A673 (cell line): ENCODE measurements at regions of chr3 and their contacts with region 1.

Region 1: GRCh38 chr3:69671082-69671952 is 67.9 kb upstream of the MITF start:
- DNase-seq: peak; percentile 15
- H3K4me3 ChIP-seq: no peak overlapping the region
- H3K27ac ChIP-seq: no peak overlapping the region
- H3K4me1 ChIP-seq: no peaks in the 10 kb centered on the region
- H3K27me3 ChIP-seq: no peaks in the 10 kb centered on the region
- CTCF ChIP-seq: peak; percentile 52

Region 2: GRCh38 chr3:69306239-69307185 is 364.8 kb before region 1 on chr3:
- CTCF ChIA-PET with region 1: no interaction called
- POLR2A ChIA-PET with region 1: no interaction called
- intact Hi-C with region 1: loop called (anchors 5 kb)
- DNase-seq: peak; percentile 66
- H3K4me3 ChIP-seq: no peak overlapping the region
- H3K27ac ChIP-seq: no peak overlapping the region
- H3K4me1 ChIP-seq: no peaks in the 10 kb centered on the region
- H3K27me3 ChIP-seq: no peaks in the 10 kb centered on the region
- CTCF ChIP-seq: peak; percentile 69

Region 3: DNA sequence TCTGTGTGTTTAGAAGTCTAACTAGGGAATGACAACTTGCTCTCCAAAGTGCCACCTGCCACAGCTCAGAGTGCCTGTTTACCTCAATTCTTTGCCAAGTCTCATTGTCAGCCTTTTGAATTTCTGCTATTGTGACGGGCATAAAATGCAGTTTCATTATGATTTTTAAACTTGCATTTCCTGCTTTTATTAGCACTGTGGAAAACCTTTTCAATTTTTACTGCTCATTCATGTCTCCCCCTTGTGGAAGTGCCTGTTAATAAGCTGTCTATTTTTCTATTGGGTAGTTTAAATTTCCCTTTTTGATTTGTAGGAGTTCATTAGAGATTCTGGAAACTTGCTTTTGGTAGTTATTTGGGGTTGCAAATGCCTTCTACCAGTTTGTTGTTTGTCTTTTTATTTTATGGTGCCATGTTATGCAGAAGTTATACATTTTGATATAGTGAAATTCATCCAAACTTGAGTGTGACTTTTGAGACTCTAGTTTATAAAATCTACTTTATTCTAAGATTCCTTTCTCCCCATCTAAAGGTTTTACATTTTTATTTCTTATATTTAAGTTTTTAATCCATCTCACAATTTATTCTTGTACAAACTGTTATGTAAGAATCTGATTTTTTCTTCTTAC is 231.6 kb before region 1 on chr3:
- CTCF ChIA-PET with region 1: no interaction called
- POLR2A ChIA-PET with region 1: no interaction called
- intact Hi-C with region 1: loop called (anchors 10 kb)
- DNase-seq: no peak
- H3K4me3 ChIP-seq: no peak overlapping the region
- H3K27ac ChIP-seq: no peak overlapping the region
- H3K4me1 ChIP-seq: no peaks in the 10 kb centered on the region
- H3K27me3 ChIP-seq: no peaks in the 10 kb centered on the region
- CTCF ChIP-seq: peak; percentile 55